ENCODE measurements at regions of chr1 and their contacts with region 1.

Region 1: GRCh38 chr1:162678439-162678838 is 46.2 kb downstream of the DDR2 start:
- DNase-seq: no peak
- ATAC-seq: peak; percentile 60

Region 2: GRCh38 chr1:162530307-162530987 is 148.0 kb before region 1 on chr1:
- intact Hi-C with region 1: no loop called
- DNase-seq: no peak
- ATAC-seq: no peak

Region 3: DNA sequence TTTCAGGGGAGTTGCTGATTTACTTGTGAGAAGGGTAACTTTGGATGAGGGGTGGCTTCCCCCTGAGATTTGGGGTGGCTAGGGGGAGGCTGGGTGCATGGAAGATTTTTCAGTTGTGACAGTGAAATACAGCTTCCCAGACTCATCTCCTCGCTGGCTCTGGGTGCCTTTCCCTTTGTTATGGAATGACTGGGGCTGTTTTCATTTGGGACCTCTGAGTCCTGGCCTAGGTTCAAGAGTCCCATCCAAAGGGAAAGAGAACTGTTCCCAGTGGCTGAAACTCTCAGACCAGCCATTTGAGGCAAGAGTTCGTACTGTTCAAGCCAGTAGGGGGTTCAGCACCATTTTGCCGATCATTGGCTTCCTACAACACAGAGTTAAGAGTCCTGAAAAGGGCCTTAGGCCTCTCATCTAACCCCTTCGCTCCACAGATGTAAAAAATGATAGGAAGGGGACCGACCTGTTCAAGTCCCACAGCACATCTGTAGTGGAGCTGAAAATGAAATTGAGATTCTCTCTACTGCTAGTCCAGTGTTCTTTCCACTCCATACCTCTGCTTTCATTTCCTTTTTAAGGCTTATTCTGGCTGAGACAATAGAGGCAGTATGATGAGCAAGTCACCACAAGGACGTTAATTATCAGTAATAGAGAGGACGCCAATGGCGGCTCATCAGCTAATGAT is 45.2 kb before region 1 on chr1:
- intact Hi-C with region 1: loop called (anchors 5 kb)
- DNase-seq: no peak
- ATAC-seq: peak; percentile 66

Region 4: DNA sequence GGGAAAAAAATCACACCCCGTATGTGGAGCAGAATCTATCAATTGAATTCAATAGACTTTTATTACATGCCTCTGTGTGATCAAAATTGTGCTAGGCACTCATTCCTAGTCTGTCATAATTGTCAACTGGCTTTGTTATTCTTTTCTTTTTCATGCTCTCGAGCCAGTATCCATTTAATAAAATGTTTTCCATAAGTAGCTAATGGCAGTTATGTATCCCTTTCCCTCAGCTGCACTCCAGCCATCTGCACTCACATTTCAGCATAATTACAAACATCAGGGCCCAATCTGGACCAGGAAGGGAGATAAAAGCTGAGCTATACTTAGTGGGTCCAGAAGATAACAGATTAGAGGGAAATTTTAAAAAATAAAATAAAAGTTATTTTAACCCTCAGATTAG is 508.4 kb after region 1 on chr1:
- intact Hi-C with region 1: no loop called
- DNase-seq: no peak
- ATAC-seq: no peak

Measured in left ventricle myocardium superior (tissue), 1 donor.